Naive thymus-derived CD4-positive, alpha-beta T cell (primary cell): ENCODE measurements at regions of chr16 and their contacts with region 1.

Region 1: DNA sequence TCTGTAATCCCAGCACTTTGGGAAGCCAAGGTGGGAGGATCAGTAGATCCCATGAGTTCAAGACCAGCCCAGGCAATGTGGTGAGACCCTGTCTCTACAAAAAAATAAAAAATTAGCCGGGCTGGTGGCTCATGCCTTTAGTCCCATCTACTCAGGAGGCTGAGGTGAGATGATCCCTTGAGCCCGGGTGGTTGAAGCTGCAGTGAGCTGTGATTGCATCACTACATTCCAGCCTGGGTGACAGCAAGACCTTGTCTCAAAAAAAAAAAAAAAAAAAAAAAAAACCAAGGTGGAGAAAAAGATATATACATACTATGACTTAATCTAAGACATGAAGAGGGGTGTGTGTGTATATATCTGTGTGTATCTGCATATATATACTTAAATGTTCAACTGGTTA is 26.7 kb downstream of the BBS2 start:
- DNase-seq: no peak
- ATAC-seq: no peak
- H3K4me3 ChIP-seq: no peak overlapping the region
- H3K4me3 Mint-ChIP-seq: no peak overlapping the region
- H3K27ac ChIP-seq: no peak overlapping the region
- H3K27ac Mint-ChIP-seq: no peak overlapping the region
- H3K4me1 ChIP-seq: no peaks in the 10 kb centered on the region
- H3K4me1 Mint-ChIP-seq: peaks cover 0 to 1% (median 0%) of the 10 kb centered on the region in 7 donors
- H3K27me3 ChIP-seq: no peaks in the 10 kb centered on the region
- H3K27me3 Mint-ChIP-seq: no peaks in the 10 kb centered on the region

Region 2: DNA sequence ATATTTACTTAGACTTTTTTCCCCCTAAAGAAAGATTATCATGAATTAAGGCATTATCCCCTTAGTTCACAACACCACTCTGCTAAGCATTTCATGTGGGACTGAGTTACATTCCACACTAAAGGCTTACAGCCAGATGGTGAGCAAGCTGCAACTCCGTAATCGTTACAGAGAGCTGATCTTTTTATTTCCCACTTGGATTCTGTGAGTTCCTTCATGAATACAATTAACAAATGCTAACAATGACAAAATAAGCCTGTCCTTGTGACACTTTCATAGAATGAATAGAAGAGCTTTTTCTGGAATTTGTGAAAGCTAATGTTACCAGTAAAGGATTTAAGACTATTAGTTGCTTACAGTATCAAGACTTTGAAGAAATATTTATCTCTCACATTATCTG is 33.0 kb before region 1 on chr16:
- CTCF ChIA-PET with region 1: no interaction called
- POLR2A ChIA-PET with region 1: interaction called, 3 read pairs
- intact Hi-C with region 1: loop called in 1 of 2 experiments (anchors 5 kb)
- DNase-seq: no peak
- ATAC-seq: no peak
- H3K4me3 ChIP-seq: no peak overlapping the region
- H3K4me3 Mint-ChIP-seq: no peak overlapping the region
- H3K27ac ChIP-seq: no peak overlapping the region
- H3K27ac Mint-ChIP-seq: no peak overlapping the region
- H3K4me1 ChIP-seq: no peaks in the 10 kb centered on the region
- H3K4me1 Mint-ChIP-seq: peaks cover 9 to 33% (median 17%) of the 10 kb centered on the region in 7 donors
- H3K27me3 ChIP-seq: no peaks in the 10 kb centered on the region
- H3K27me3 Mint-ChIP-seq: no peaks in the 10 kb centered on the region

Region 3: GRCh38 chr16:56564773-56565477 is 71.8 kb after region 1 on chr16 and contains the start of gene MT4:
- CTCF ChIA-PET with region 1: no interaction called
- POLR2A ChIA-PET with region 1: no interaction called
- intact Hi-C with region 1: no loop called
- DNase-seq: no peak
- ATAC-seq: no peak
- H3K4me3 ChIP-seq: no peak within 1 kb of the TSS
- H3K4me3 Mint-ChIP-seq: no peak within 1 kb of the TSS
- H3K27ac ChIP-seq: no peak within 1 kb of the TSS
- H3K27ac Mint-ChIP-seq: no peak within 1 kb of the TSS
- H3K4me1 ChIP-seq: no peaks in the 10 kb centered on the region
- H3K4me1 Mint-ChIP-seq: peaks cover 0 to 6% (median 0%) of the 10 kb centered on the region in 7 donors
- H3K27me3 ChIP-seq: no peaks in the 10 kb centered on the region
- H3K27me3 Mint-ChIP-seq: peaks cover 0 to 17% (median 5%) of the 10 kb centered on the region in 5 donors
- total RNA-seq, gene MT4: not detected